CD8-positive, alpha-beta T cell (primary cell): ENCODE measurements at regions of chr1 and their contacts with region 1.

Region 1: DNA sequence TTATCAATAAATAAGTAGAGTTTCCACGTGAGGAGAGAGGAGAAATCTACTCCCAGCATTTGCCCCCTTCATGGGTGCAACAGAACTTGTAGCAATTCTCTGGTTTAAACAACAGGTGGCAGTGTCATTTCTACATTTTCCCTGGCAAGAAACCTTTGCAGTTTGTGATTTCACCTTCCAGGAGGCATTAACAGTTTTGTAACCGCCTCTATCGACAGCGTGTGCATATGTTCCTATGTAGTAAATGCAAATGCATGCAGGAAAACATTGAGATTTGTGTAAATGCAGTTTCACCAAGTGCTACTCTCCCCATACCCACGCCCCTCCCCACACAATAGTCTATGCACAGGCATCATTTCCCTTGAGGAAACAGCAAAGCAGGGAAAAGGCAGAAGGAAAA is 494.7 kb downstream of the SMYD3 start:
- DNase-seq: peak in 2 of 9 experiments; percentile 16 to 32
- ATAC-seq: peak; percentile 38
- H3K4me3 ChIP-seq: no peak overlapping the region
- H3K4me3 Mint-ChIP-seq: no peak overlapping the region
- H3K27ac ChIP-seq: no peak overlapping the region
- H3K27ac Mint-ChIP-seq: no peak overlapping the region
- H3K4me1 ChIP-seq: no peaks in the 10 kb centered on the region
- H3K4me1 Mint-ChIP-seq: no peaks in the 10 kb centered on the region
- H3K27me3 ChIP-seq: no peaks in the 10 kb centered on the region
- H3K27me3 Mint-ChIP-seq: no peaks in the 10 kb centered on the region
- CTCF ChIP-seq: peak; percentile 54

Region 2: DNA sequence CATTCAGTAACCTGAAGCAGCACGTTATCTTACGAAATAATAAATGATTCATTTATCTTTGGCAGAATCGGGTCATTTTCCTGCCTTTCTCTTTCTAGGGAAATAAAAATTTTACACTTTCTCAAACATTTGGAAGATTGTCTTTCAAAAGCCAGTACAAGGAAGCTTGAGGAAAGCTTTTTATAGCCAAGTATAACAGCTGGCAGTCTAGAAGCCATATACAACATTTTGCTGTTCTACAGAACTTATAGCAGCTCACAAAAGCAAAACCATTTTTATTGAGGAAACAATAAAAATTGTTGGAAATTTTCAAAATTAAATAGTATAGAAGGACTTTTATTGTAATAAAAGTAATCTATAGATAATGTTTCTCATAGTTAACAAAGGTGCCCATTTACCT is 46.1 kb after region 1 on chr1:
- CTCF ChIA-PET with region 1: no interaction called
- POLR2A ChIA-PET with region 1: no interaction called
- intact Hi-C with region 1: no loop called
- DNase-seq: no peak
- ATAC-seq: no peak
- H3K4me3 ChIP-seq: no peak overlapping the region
- H3K4me3 Mint-ChIP-seq: no peak overlapping the region
- H3K27ac ChIP-seq: no peak overlapping the region
- H3K27ac Mint-ChIP-seq: no peak overlapping the region
- H3K4me1 ChIP-seq: no peaks in the 10 kb centered on the region
- H3K4me1 Mint-ChIP-seq: no peaks in the 10 kb centered on the region
- H3K27me3 ChIP-seq: no peaks in the 10 kb centered on the region
- H3K27me3 Mint-ChIP-seq: no peaks in the 10 kb centered on the region
- CTCF ChIP-seq: no peak

Region 3: DNA sequence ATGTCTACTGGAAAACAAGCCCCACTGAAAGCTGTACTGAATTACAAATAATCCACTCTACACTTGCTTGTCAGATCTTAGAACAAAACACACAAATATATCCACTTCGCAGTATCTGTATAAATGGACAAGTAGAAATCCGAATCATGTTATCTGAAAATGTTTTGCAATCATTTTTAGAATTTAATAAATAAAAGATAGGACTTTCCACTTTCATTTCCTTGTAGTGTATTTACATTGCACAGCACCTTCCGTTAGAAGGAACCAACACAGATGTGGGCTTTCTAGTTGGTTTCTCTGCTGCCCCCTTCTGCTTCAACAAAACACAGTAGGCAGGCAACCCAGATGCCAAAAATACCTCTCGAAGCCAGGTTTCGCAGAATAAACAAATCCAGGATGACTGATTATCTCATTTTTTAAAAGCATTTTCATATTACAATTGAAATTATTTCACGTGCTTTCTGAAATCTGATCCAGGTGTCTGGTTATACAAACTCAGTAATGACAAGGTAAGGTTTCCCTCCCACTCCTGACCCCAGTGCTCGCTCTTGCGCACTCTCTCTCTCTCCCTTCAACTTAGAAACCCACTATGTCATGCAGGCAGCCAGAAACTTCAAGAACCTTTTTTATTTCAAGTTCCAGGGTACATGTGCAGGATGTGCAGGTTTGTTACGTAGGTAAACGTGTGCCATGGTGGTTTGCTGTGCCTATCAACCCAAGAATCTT is 104.9 kb after region 1 on chr1:
- CTCF ChIA-PET with region 1: no interaction called
- POLR2A ChIA-PET with region 1: no interaction called
- intact Hi-C with region 1: loop called (anchors 1 to 5 kb)
- DNase-seq: peak; percentile 9 to 77 (median 42)
- ATAC-seq: peak; percentile 91
- H3K4me3 ChIP-seq: no peak overlapping the region
- H3K4me3 Mint-ChIP-seq: peak overlapping the region; percentile 56
- H3K27ac ChIP-seq: peak overlapping the region in 1 of 2 experiments; percentile 41
- H3K27ac Mint-ChIP-seq: peak overlapping the region; percentile 82
- H3K4me1 ChIP-seq: peaks cover 14% of the 10 kb centered on the region
- H3K4me1 Mint-ChIP-seq: peaks cover 32% of the 10 kb centered on the region
- H3K27me3 ChIP-seq: no peaks in the 10 kb centered on the region
- H3K27me3 Mint-ChIP-seq: no peaks in the 10 kb centered on the region
- CTCF ChIP-seq: peak; percentile 52

Region 4: DNA sequence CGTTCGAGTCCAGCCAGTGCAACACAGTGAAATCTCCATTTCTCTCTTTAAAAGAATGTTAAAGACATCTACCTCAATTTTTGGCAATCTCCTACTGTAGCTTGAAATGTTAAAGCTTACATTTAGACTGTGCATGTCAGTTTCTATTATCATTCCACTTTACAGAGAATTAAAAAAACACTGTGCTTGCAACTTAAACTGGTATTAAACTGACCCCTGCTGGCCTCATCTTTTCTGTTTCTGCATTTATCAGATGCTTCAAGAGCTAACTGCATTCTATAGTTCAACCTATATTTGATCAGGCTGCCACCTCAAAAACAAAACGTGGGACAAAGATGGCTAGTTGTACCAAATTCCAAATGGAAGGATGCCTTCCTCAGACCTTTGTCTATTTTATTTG is 268.2 kb after region 1 on chr1:
- CTCF ChIA-PET with region 1: no interaction called
- POLR2A ChIA-PET with region 1: no interaction called
- intact Hi-C with region 1: loop called in 1 of 2 experiments (anchors 10 kb)
- DNase-seq: peak in 1 of 9 experiments; percentile 2
- ATAC-seq: no peak
- H3K4me3 ChIP-seq: no peak overlapping the region
- H3K4me3 Mint-ChIP-seq: no peak overlapping the region
- H3K27ac ChIP-seq: no peak overlapping the region
- H3K27ac Mint-ChIP-seq: no peak overlapping the region
- H3K4me1 ChIP-seq: no peaks in the 10 kb centered on the region
- H3K4me1 Mint-ChIP-seq: peaks cover 2% of the 10 kb centered on the region
- H3K27me3 ChIP-seq: no peaks in the 10 kb centered on the region
- H3K27me3 Mint-ChIP-seq: no peaks in the 10 kb centered on the region
- CTCF ChIP-seq: no peak

Region 5: DNA sequence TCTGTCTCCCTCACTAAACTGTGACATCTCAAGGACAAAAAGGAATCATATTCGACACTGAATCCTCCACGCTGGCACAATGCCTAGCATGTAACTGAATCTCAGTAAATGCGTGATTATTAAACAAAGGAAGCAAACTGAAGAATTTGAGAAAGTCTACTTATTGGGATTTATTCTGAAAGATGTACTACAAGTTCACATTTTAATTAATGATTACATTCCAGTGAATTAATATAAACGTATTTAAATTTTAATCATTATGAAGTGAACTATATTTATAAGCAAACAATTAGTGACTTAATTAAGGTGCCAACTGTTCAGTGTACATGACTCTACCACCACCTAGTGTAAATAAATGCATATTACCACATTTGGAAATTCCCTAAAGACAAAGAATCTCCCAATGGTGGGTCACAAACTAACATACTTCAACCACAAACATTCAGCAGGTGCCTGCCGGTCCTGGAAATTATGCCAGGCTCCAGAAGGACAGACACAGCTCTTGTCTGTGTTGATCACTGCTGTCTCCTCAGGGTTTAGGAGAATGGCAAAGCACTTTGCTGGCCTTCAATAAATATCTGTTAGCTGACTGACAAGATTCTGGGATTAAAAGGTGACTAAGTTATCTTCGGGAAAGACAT is 438.4 kb after region 1 on chr1:
- CTCF ChIA-PET with region 1: no interaction called
- POLR2A ChIA-PET with region 1: no interaction called
- intact Hi-C with region 1: loop called in 1 of 2 experiments (anchors 2 kb)
- DNase-seq: peak in 2 of 9 experiments; percentile 13 to 30
- ATAC-seq: no peak
- H3K4me3 ChIP-seq: no peak overlapping the region
- H3K4me3 Mint-ChIP-seq: no peak overlapping the region
- H3K27ac ChIP-seq: no peak overlapping the region
- H3K27ac Mint-ChIP-seq: no peak overlapping the region
- H3K4me1 ChIP-seq: no peaks in the 10 kb centered on the region
- H3K4me1 Mint-ChIP-seq: peaks cover 2% of the 10 kb centered on the region
- H3K27me3 ChIP-seq: no peaks in the 10 kb centered on the region
- H3K27me3 Mint-ChIP-seq: no peaks in the 10 kb centered on the region
- CTCF ChIP-seq: peak; percentile 55

Region 6: DNA sequence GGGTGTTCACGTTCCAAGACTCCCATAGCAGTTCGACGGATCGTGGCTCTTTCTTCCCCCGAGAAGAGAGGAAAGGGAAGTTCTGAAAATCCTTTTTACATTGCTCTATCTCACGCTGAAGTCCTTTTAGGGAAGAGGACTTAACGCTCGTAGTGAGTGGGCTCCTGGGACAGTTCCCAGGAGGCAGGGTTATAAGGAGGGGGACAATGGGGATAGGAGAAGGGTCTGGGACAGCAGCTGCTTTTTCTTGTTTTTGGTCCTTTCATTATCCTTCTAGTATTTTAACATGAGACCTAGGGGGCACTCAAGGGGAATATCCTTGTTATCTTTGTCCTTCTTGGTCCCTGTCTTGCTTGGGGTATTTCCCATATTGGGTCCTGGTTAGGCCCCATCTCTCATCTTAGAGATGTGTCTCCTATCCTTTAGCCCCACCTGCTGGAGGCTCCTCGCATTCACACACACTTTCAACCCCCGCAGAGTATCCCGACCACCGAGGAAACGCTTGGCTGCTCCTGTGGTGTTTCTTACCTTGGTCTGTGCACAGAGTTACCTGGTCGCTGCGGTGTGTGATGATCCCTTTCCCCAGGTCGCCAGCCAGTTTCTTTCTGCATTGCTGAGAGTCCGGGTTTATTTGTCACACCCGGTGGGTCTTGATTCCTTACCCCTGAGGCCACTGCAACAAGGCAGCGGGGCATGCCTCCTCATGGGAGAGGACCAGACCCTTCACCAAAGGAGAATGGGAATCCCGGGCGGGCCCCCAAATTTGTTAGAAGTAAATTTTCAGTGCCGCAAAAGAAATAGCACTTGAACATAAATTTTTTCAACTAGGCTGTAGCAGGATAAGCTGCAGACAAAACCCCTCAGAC is 741.6 kb after region 1 on chr1:
- CTCF ChIA-PET with region 1: no interaction called
- POLR2A ChIA-PET with region 1: no interaction called
- intact Hi-C with region 1: loop called (anchors 10 kb)
- DNase-seq: peak; percentile 36 to 75 (median 62)
- ATAC-seq: peak; percentile 82
- H3K4me3 ChIP-seq: no peak overlapping the region
- H3K4me3 Mint-ChIP-seq: no peak overlapping the region
- H3K27ac ChIP-seq: no peak overlapping the region
- H3K27ac Mint-ChIP-seq: no peak overlapping the region
- H3K4me1 ChIP-seq: no peaks in the 10 kb centered on the region
- H3K4me1 Mint-ChIP-seq: no peaks in the 10 kb centered on the region
- H3K27me3 ChIP-seq: no peaks in the 10 kb centered on the region
- H3K27me3 Mint-ChIP-seq: no peaks in the 10 kb centered on the region
- CTCF ChIP-seq: peak; percentile 61